T-cell (primary cell): ENCODE measurements at regions of chr17 and their contacts with region 1.

Region 1: GRCh38 chr17:69414408-69415274 is at the start of gene MAP2K6:
- DNase-seq: peak; percentile 61 to 90 (median 80)
- ATAC-seq: peak; percentile 96 to 98 (median 98)
- H3K4me3 ChIP-seq: peak within 1 kb of the TSS; percentile 62 to 64
- H3K4me3 Mint-ChIP-seq: no peak within 1 kb of the TSS
- H3K27ac ChIP-seq: peak within 1 kb of the TSS; percentile 37
- H3K27ac Mint-ChIP-seq: no peak within 1 kb of the TSS
- H3K4me1 ChIP-seq: peaks cover 11 to 19% of the 10 kb centered on the region in 2 experiments
- H3K4me1 Mint-ChIP-seq: peaks cover 0 to 9% (median 8%) of the 10 kb centered on the region in 3 donors
- H3K27me3 ChIP-seq: no peaks in the 10 kb centered on the region
- H3K27me3 Mint-ChIP-seq: no peaks in the 10 kb centered on the region
- total RNA-seq, gene MAP2K6: 10.4 to 25.1 (median 11.5) TPM

Region 2: DNA sequence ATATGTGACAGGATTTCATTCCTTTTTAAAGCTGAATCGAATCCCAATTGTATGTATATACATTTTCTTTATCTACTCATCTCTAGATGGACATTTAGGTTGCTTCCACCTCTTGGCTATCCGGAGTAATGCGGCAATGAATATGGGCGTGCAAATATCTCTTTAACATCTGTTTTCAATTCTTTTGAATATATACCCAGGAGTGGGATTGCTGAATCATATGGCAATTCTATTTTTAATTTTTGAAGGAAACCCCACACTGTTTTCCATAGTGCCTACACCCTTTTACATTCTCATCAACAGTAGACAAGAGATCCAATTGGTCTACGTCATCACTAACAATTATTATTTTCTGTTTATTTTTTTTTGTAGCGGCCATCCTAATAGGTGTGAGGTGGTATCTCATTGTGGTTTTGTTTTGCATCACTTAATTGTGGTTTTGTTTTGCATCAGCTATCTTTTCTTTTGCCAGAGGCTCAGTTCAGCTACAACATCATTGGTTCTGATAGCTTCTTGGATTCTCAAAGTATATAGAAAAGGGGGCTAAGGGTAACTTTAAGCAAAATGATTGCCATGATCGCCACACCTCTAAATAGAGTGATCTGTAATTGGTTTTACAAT is 25.7 kb before region 1 on chr17:
- CTCF ChIA-PET with region 1: interaction called in 1 of 2 experiments, 15 read pairs
- POLR2A ChIA-PET with region 1: no interaction called
- DNase-seq: no peak
- ATAC-seq: no peak
- H3K4me3 ChIP-seq: no peak overlapping the region
- H3K4me3 Mint-ChIP-seq: no peak overlapping the region
- H3K27ac ChIP-seq: no peak overlapping the region
- H3K27ac Mint-ChIP-seq: no peak overlapping the region
- H3K4me1 ChIP-seq: no peaks in the 10 kb centered on the region
- H3K4me1 Mint-ChIP-seq: no peaks in the 10 kb centered on the region
- H3K27me3 ChIP-seq: peaks cover 0 to 8% of the 10 kb centered on the region in 2 experiments
- H3K27me3 Mint-ChIP-seq: peaks cover 16 to 18% of the 10 kb centered on the region in 2 donors

Region 3: DNA sequence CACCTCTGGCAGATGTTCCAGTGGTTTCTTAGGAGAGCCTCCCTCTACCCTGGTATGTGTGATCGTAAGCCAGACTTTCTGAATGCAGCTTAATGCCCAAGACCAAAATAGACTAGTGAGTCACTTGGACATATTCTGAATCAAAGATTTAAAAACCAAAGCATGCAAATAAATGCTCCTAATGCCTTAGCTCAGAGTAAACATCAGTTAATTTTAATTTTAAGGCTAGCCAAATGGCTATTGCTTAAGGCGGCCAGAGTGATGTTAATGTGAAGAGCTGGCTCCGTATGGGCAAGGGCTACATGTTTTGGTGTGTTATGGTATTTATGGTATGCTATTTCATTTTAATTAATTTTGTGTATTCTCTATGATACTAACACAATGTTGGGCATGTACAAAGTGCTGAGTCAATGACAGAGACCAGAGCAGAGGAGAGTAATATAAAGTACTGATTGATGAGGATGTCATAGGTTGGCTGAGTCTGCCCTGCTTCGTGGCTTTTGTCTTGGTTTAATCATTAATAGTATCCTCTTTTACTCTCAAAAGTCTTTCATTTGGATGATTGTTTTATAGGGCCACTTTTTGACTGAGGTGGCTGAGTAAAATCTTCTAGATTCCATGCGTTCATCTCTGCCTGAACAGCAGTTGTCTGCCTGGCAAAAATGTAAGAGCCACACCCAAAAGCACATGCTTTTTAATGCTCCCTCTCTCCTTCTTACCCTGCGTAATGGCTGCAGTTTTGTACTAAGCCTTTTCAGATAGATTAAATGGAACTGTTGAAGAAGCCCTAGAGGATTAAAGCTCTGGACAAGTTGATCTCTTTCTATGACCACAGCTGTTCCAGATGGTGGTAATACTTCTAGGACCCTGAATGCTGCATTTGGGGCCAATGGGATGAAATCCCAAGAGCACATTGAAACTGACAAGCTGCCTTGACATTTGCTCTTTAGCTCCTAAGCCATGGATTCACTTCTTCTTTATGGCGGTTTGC is 59.5 kb after region 1 on chr17:
- CTCF ChIA-PET with region 1: no interaction called
- POLR2A ChIA-PET with region 1: no interaction called
- DNase-seq: no peak
- ATAC-seq: no peak
- H3K4me3 ChIP-seq: no peak overlapping the region
- H3K4me3 Mint-ChIP-seq: no peak overlapping the region
- H3K27ac ChIP-seq: no peak overlapping the region
- H3K27ac Mint-ChIP-seq: no peak overlapping the region
- H3K4me1 ChIP-seq: peaks cover 0 to 7% of the 10 kb centered on the region in 2 experiments
- H3K4me1 Mint-ChIP-seq: peaks cover 26 to 48% (median 26%) of the 10 kb centered on the region in 3 donors
- H3K27me3 ChIP-seq: no peaks in the 10 kb centered on the region
- H3K27me3 Mint-ChIP-seq: no peaks in the 10 kb centered on the region